IMR-90 (cell line): ENCODE measurements at regions of chr22 and their contacts with region 1.

Region 1: DNA sequence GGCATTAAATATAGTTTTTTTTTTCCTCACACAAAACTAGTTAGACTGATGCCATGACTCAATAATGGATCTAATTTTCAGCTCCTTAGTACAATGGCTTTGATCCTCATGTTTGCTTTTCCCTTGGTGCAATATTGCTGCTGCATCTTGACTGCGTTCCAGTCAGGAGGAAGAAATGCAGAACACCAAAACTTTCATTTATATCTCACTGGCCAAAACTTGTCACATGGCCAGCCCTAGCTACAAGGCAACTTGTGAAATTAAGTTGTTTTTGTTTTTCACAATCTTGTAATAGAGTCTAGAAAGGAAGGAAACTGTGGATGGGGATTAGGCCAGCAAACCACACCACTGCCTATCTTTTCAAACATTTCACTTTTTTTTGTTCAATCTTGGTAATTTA is 36.7 kb downstream of the SMC1B start:
- DNase-seq: no peak
- ATAC-seq: no peak
- H3K4me3 ChIP-seq: no peak overlapping the region
- H3K27ac ChIP-seq: no peak overlapping the region
- H3K4me1 ChIP-seq: no peaks in the 10 kb centered on the region
- H3K27me3 ChIP-seq: peaks cover 8% of the 10 kb centered on the region
- CTCF ChIP-seq: no peak
- POLR2A ChIP-seq: no peak
- RAD21 ChIP-seq: no peak

Region 2: DNA sequence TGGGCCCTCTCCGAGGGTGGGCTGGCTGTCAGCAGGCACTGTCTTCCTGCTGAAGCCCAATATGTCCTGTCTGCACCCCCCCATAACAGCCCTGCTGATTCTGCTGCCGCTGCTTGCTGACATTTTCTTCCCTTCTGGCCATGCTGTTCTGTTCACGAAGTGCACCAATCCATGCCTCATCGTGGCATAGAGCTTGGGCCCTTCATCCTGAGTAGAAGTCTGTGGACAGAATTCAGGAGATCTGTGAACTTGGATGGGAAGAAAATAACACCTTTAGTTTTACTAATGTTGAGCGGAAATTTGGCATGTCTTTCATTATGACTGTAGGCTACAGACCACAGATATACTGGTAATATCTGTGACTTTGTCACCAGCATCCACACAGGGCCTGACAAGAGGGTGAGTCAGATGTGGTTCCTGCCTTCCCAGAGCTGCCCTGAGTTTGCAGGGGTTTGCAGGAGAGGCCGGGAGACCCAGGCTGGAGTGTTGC is 121.9 kb before region 1 on chr22:
- CTCF ChIA-PET with region 1: no interaction called
- POLR2A ChIA-PET with region 1: no interaction called
- dilution Hi-C with region 1: no loop called
- in situ Hi-C with region 1: no loop called
- intact Hi-C with region 1: no loop called
- DNase-seq: no peak
- ATAC-seq: peak; percentile 32; the same call in 1 of the 2 replicates
- H3K4me3 ChIP-seq: no peak overlapping the region
- H3K27ac ChIP-seq: no peak overlapping the region
- H3K4me1 ChIP-seq: no peaks in the 10 kb centered on the region
- H3K27me3 ChIP-seq: peaks cover 2% of the 10 kb centered on the region; the same call in 1 of the 2 replicates
- CTCF ChIP-seq: no peak
- POLR2A ChIP-seq: no peak
- RAD21 ChIP-seq: no peak

Region 3: DNA sequence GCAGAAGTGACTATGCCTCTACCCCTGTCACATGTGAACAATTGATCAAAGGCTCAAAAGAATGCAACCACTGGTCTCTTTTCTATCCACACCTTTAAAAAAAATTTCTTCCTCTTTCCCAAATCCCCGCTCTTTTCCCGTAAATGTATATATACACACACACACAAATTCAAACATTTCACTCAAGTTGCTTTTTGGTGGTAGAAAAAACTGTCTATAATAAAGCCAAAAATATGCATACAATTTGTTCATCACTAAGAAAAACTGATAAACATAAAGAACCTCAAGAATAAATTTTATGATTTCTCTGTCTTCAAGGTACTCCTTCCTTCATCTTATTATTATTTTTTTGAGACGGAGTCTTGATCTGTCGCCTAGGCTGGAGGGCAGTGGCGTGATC is 31.1 kb after region 1 on chr22:
- CTCF ChIA-PET with region 1: no interaction called
- POLR2A ChIA-PET with region 1: no interaction called
- dilution Hi-C with region 1: no loop called
- in situ Hi-C with region 1: no loop called
- intact Hi-C with region 1: loop called (anchors 5 kb)
- DNase-seq: no peak
- ATAC-seq: no peak
- H3K4me3 ChIP-seq: no peak overlapping the region
- H3K27ac ChIP-seq: no peak overlapping the region
- H3K4me1 ChIP-seq: no peaks in the 10 kb centered on the region
- H3K27me3 ChIP-seq: peaks cover 9% of the 10 kb centered on the region
- CTCF ChIP-seq: no peak
- POLR2A ChIP-seq: no peak
- RAD21 ChIP-seq: no peak